Panc1 (cell line): ENCODE measurements at regions of chr9 and their contacts with region 1.

Region 1: GRCh38 chr9:2780846-2781245 is 63.0 kb downstream of the PUM3 start:
- DNase-seq: no peak
- ATAC-seq: no peak
- H3K4me3 ChIP-seq: no peak overlapping the region
- H3K27ac ChIP-seq: no peak overlapping the region
- H3K4me1 ChIP-seq: no peaks in the 10 kb centered on the region
- H3K27me3 ChIP-seq: no peaks in the 10 kb centered on the region
- CTCF ChIP-seq: no peak

Region 2: DNA sequence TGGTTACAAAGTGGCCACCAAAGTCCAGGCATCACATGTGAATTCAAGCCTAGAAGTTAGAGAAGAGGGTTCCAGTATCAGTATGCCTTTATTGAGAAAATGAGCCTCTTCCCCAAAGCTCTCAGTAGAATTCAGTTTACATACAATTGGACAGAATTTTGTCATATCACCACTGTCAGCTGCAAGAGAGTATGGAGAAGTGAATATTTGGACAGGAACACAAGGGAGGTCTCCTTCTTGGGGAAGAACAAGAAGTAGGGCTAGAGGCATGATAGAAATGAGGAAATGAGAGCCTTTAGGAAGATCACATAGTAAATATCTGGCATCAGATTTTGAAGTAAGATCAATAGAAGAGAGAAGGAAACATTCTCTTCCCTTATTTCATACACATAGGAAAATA is 187.1 kb before region 1 on chr9:
- CTCF ChIA-PET with region 1: no interaction called
- POLR2A ChIA-PET with region 1: no interaction called
- in situ Hi-C with region 1: no loop called
- intact Hi-C with region 1: no loop called
- DNase-seq: no peak
- ATAC-seq: no peak
- H3K4me3 ChIP-seq: no peak overlapping the region
- H3K27ac ChIP-seq: no peak overlapping the region
- H3K4me1 ChIP-seq: no peaks in the 10 kb centered on the region
- H3K27me3 ChIP-seq: no peaks in the 10 kb centered on the region
- CTCF ChIP-seq: no peak

Region 3: DNA sequence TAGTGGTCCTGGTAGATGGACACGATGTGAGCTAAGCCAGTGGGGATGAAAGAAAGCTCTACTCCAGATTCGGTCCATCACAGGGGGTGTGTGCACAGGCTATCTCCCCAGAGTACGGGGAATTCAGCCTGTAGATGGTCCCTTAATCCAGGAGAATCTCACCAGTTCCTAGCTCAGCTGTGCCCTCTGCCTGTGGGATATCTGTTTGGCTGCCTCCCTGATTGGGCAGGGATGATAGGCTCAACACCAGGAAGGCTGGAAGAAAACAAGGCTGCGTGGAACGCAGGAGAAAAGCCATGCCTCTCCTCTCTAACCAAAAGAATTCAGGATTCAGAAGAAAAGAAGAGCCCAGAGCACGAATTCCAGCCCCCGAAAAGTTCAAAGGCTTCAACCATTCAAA is 118.3 kb before region 1 on chr9:
- CTCF ChIA-PET with region 1: no interaction called
- POLR2A ChIA-PET with region 1: no interaction called
- in situ Hi-C with region 1: no loop called
- intact Hi-C with region 1: loop called (anchors 5 kb)
- DNase-seq: no peak
- ATAC-seq: no peak
- H3K4me3 ChIP-seq: no peak overlapping the region
- H3K27ac ChIP-seq: no peak overlapping the region
- H3K4me1 ChIP-seq: no peaks in the 10 kb centered on the region
- H3K27me3 ChIP-seq: no peaks in the 10 kb centered on the region
- CTCF ChIP-seq: no peak

Region 4: GRCh38 chr9:2859776-2860379 is 79.0 kb after region 1 on chr9:
- CTCF ChIA-PET with region 1: no interaction called
- POLR2A ChIA-PET with region 1: no interaction called
- in situ Hi-C with region 1: no loop called
- intact Hi-C with region 1: no loop called
- DNase-seq: peak; percentile 18
- ATAC-seq: no peak
- H3K4me3 ChIP-seq: no peak overlapping the region
- H3K27ac ChIP-seq: no peak overlapping the region
- H3K4me1 ChIP-seq: no peaks in the 10 kb centered on the region
- H3K27me3 ChIP-seq: no peaks in the 10 kb centered on the region
- CTCF ChIP-seq: peak; percentile 71